Activated CD4-positive, alpha-beta T cell treated with anti-CD3 and anti-CD28 coated beads, Interleukin-2, amount 10 ng/mL, durations not matched to agents 7 days and 5 days (primary cell): ENCODE measurements at regions of chr14 and their contacts with region 1.

Region 1: DNA sequence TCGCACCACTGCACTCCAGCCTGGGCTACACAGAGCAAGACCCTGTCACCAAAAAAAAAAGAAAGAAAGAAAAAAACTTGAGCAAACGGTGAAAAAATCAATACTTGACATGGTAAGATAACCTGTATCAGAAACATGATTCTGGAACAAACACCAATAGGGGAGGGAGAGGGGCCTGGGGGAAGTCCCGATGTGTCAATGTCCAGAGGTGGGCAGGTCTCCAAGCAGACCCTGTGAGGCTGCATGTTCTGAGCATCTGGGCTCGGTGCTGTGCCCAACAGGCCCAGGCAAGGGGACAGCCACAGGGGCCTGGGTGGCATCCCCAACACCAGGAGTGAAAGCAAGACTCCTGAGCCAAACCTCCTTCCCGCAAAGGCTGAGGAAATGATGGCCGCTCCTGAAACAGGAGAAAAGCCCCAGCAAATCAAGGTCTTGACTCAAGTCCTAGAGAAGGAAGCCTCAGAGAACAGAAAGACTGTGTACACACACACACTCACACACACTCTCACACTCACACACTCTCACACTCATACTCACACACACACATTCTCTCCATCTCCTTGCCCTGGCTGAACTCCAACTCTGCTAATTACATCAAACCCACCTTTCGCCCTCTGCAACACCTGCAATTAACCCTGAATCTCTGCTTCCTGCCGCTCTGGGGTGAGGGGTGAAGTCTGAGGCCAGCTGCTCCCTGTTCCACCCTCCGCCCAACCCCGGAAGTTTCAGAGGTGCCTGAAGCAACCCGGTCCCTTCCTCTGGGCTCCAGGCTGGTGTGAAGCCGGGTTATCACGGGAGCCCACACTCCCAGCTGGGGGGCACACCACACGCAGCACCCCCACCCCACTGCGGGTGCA is 20.4 kb downstream of the CCDC88C start:
- DNase-seq: peak; percentile 84
- H3K4me3 Mint-ChIP-seq: peak overlapping the region; percentile 59
- H3K27ac Mint-ChIP-seq: peak overlapping the region; percentile 85
- H3K4me1 Mint-ChIP-seq: peaks cover 96% of the 10 kb centered on the region
- H3K27me3 Mint-ChIP-seq: no peaks in the 10 kb centered on the region

Region 2: GRCh38 chr14:91252871-91253794 is 144.1 kb before region 1 on chr14:
- CTCF ChIA-PET with region 1: no interaction called
- POLR2A ChIA-PET with region 1: no interaction called
- DNase-seq: peak; percentile 46
- H3K4me3 Mint-ChIP-seq: peak overlapping the region; percentile 43
- H3K27ac Mint-ChIP-seq: peak overlapping the region; percentile 96
- H3K4me1 Mint-ChIP-seq: peaks cover 84% of the 10 kb centered on the region
- H3K27me3 Mint-ChIP-seq: no peaks in the 10 kb centered on the region

Region 3: DNA sequence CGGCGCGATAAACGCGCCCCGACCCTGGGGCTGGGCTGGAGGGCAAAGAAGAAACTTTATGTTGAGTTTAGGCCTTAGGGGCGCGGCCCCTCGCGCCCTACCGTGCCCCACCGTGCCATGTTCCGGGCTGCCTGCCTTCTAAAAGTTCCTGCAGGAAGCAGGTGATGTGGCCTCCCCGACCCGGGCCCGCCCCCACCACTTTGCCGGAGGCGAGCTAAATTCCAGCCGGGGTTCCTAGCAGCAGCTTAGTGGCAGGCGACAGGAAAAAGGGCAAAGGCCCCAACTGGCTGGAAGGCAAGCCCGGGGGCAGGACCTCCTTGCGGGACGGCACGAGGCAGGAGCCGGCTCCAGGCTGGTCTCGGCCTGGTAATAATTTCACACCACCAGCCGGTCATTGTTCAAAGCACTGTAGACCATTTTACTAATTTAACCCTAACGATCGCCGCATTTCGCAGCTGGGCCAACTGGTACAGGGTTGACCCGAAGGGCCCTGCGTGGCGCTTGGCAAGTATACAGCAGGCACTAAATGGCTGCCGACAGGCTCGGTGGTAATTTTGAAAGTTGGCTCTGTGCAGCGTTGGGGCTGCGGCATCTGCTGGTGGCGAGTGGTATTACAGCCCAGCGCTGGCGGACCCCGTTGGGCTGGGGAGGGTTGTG is 21.3 kb after region 1 on chr14:
- CTCF ChIA-PET with region 1: interaction called, 64 read pairs
- POLR2A ChIA-PET with region 1: interaction called, 4 read pairs
- DNase-seq: peak; percentile 80
- H3K4me3 Mint-ChIP-seq: peak overlapping the region; percentile 65
- H3K27ac Mint-ChIP-seq: peak overlapping the region; percentile 88
- H3K4me1 Mint-ChIP-seq: peaks cover 36% of the 10 kb centered on the region
- H3K27me3 Mint-ChIP-seq: no peaks in the 10 kb centered on the region

Region 4: DNA sequence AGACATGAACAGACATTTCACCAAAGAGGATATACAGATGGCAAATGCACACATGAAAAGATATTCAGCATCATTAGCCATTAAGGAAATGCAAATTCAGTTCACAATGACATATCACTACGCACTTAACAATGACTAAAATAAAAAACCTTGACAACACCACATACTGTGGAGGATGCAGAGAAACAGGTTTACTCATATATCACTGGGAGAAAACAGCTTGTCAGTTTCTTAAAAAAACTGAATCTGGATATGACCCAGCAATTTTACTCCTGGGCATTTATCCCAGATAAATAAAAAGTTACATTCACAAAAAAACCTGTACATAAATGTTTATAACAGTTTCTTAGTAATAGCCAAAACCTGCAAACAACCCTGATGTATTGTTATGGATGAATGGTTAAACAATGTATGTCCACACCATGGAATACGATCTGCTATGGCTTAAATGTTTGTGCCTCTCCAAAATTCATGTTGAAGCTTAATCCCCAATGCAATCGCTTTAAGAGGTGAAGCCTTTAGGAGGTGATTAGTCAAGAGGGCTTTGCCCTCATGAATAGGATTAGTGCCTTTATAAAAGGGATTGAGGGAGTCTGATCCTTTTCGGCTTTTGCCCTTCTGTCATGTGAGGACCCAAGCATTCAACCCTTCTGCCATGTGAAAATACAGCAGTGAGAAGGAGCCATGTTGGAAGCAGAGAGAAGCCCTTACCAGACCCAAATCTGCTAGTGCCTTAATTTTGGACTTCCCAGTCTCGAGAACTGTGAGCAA is 148.9 kb after region 1 on chr14:
- CTCF ChIA-PET with region 1: no interaction called
- POLR2A ChIA-PET with region 1: no interaction called
- DNase-seq: no peak
- H3K4me3 Mint-ChIP-seq: no peak overlapping the region
- H3K27ac Mint-ChIP-seq: no peak overlapping the region
- H3K4me1 Mint-ChIP-seq: no peaks in the 10 kb centered on the region
- H3K27me3 Mint-ChIP-seq: peaks cover 15% of the 10 kb centered on the region